Activated B cell treated with CpG ODN at 0.5 μM for 24 hours (primary cell): ENCODE measurements at regions of chr17 and their contacts with region 1.

Region 1: DNA sequence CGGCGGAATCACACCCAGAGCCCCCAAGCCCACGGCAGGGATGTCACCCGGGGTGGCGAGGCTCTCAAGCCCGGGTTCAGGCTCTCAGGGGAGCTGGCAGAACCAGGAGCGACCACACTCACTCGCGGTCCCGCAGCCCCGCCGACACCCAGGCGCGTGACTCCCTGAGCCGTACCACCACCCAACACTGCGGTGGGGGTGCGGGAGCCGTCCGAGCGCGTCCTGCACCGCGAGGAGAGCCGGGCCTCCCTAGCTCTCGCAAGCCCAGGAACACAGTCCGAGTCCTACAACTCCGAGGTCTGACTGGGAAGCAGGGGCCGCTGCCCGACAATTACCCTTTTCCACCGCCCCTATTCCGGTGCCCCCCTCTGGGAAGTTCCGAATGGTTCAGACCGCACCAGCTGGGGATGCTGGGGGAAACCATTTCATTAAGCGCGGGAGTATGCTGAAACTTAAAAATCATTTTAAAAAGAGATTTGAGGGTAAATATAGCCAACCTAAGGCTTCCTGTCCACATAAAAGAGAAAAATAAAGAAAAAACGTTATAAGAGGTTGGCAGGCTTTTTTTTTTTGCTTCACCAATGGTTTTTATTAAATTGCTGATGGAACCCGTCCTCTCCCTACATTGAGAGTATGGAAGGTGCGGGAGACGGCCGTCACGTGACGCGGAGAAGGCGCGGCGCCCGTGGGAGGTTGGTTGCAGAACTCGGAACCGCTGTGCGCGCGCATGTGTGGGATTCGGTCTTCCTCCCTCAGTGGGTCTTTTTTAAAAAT is at the start of gene FLCN:
- DNase-seq: peak; percentile 89
- ATAC-seq: peak; percentile 90
- H3K4me3 Mint-ChIP-seq: peak within 1 kb of the TSS; percentile 96
- H3K27ac Mint-ChIP-seq: peak within 1 kb of the TSS; percentile 99
- H3K4me1 Mint-ChIP-seq: peaks cover 14% of the 10 kb centered on the region
- H3K27me3 Mint-ChIP-seq: no peaks in the 10 kb centered on the region
- CTCF ChIP-seq: no peak
- total RNA-seq, gene FLCN: 54.5 and 62.3 TPM in 2 replicates

Region 2: DNA sequence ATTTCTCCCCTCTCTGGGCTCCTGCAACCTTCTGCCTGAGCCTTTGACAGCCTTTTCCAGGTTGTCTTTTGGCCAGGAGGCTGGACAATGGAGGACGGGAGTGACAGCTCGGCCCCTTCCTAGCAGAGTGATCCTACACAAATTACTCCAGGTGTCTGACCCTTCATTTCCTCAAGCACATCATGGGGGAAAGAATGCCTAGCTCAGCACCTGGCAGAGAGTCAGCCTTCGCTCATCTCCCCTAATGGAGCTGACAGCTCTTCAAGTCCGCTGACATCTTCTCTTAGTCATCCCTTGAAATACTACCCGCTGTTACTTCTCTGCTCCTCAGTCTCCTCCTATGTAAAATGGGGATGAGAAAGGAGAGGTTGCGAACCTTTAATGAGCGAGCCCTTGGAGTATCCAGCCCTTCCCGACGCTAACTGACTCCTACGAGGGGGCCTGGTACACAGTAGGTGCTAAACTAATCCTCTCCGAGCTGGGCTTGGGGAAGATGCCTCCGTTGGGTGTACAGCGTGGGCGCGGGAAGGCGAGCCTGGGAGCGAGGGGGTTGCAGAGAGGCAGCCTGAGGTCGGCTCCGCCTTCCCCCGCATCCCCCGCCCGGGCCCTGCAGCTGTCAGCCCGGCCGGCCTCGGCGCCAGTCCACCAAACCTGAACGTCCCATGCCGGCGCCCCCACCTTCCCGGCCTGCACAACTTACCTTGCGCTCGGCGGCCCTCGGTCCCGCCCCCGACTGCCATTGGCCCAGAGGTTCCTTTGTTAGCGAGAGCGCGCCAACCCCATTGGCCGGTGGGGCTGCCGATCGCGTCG is 195.4 kb before region 1 on chr17:
- CTCF ChIA-PET with region 1: no interaction called
- POLR2A ChIA-PET with region 1: interaction called, 3 read pairs
- intact Hi-C with region 1: loop called (anchors 2 kb)
- DNase-seq: peak; percentile 94
- ATAC-seq: peak; percentile 93
- H3K4me3 Mint-ChIP-seq: peak overlapping the region; percentile 69
- H3K27ac Mint-ChIP-seq: no peak overlapping the region
- H3K4me1 Mint-ChIP-seq: peaks cover 48% of the 10 kb centered on the region
- H3K27me3 Mint-ChIP-seq: no peaks in the 10 kb centered on the region
- CTCF ChIP-seq: no peak

Region 3: DNA sequence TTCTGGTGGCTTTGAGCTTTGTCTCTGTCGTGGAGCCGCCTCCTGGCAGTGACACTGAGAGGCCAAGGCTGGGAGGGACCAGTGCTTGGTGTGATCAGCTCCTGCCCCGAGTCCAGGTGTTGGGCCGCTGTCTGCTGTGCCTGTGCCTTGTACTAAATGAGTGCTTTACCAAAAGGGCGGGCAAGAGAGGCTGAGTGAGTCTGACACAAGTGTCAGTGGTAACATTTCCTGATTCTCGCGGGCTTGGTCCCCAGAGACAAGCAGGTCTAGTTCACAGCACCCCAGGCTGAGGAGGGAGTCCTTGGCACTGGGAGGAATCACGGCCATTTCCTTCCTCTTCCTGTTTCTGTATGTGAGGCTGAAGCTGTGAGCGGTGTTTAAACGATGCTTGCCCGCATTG is 61.3 kb before region 1 on chr17:
- CTCF ChIA-PET with region 1: no interaction called
- POLR2A ChIA-PET with region 1: interaction called, 6 read pairs
- intact Hi-C with region 1: loop called (anchors 2 kb)
- DNase-seq: peak; percentile 47
- ATAC-seq: peak; percentile 94
- H3K4me3 Mint-ChIP-seq: peak overlapping the region; percentile 59
- H3K27ac Mint-ChIP-seq: peak overlapping the region; percentile 80
- H3K4me1 Mint-ChIP-seq: peaks cover 40% of the 10 kb centered on the region
- H3K27me3 Mint-ChIP-seq: no peaks in the 10 kb centered on the region
- CTCF ChIP-seq: no peak

Region 4: GRCh38 chr17:17220529-17220928 is 16.7 kb before region 1 on chr17:
- CTCF ChIA-PET with region 1: no interaction called
- POLR2A ChIA-PET with region 1: no interaction called
- intact Hi-C with region 1: no loop called
- DNase-seq: no peak
- ATAC-seq: no peak
- H3K4me3 Mint-ChIP-seq: no peak overlapping the region
- H3K27ac Mint-ChIP-seq: no peak overlapping the region
- H3K4me1 Mint-ChIP-seq: no peaks in the 10 kb centered on the region
- H3K27me3 Mint-ChIP-seq: no peaks in the 10 kb centered on the region
- CTCF ChIP-seq: no peak

Region 5: DNA sequence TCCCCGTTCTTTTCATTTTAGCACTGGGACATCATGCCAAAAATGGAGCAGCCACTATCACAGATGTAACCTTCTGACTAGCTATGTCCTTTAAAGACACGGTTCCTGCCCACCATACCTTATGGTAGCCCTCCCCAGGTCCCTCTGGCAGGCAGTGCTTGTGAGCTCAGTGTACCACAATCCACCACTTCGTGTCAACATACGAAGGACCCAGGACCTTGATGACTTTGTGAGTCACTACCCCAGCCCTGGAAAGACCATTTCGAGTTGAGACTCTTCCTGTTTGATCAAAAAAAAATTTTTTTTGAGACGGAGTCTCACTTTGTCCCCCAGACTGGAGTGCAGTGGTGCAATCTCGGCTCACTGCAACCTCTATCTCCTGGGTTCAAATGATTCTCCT is 20.8 kb after region 1 on chr17:
- CTCF ChIA-PET with region 1: no interaction called
- POLR2A ChIA-PET with region 1: interaction called, 10 read pairs
- intact Hi-C with region 1: no loop called
- DNase-seq: no peak
- ATAC-seq: no peak
- H3K4me3 Mint-ChIP-seq: no peak overlapping the region
- H3K27ac Mint-ChIP-seq: no peak overlapping the region
- H3K4me1 Mint-ChIP-seq: no peaks in the 10 kb centered on the region
- H3K27me3 Mint-ChIP-seq: no peaks in the 10 kb centered on the region
- CTCF ChIP-seq: no peak

Region 6: DNA sequence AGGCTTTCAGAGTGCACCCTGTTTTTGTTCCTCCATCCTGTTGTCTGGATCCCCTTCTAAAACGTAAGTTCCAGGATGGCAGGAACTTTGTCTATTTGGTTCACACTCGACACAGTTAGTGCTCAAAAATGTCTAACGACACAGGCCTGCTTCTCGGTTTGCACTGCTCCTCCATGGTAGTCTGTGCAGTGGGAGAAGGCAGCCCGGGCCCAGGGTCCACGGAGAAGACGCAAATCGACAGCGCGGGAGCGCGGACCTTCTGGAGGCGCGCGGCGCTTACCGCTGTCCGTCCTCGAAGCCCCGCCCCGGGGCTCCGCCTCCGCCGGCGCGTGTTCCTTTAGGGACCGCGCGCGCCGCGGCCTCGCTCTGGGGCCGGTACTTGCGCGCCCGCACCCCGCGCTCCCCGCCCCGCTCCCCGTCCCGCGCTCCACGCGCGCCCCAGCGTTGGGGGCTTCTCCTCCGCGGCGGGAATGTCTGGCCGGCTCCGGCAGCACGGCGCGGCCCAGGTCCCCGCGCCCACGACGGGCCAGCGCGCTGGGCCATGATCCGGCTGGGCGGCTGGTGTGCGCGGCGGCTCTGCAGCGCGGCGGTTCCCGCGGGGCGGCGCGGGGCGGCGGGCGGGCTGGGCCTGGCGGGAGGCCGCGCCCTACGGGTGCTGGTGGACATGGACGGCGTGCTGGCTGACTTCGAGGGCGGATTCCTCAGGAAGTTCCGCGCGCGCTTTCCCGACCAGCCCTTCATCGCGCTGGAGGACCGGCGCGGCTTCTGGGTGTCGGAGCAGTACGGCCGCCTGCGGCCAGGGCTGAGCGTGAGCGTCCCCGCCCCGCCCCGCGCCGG is 66.0 kb after region 1 on chr17 and contains the start of gene NT5M:
- CTCF ChIA-PET with region 1: no interaction called
- POLR2A ChIA-PET with region 1: no interaction called
- intact Hi-C with region 1: loop called (anchors 5 kb)
- DNase-seq: peak; percentile 73
- ATAC-seq: peak; percentile 76
- H3K4me3 Mint-ChIP-seq: peak within 1 kb of the TSS; percentile 87
- H3K27ac Mint-ChIP-seq: peak within 1 kb of the TSS; percentile 61
- H3K4me1 Mint-ChIP-seq: peaks cover 34% of the 10 kb centered on the region
- H3K27me3 Mint-ChIP-seq: no peaks in the 10 kb centered on the region
- CTCF ChIP-seq: no peak
- total RNA-seq, gene NT5M: 0.71 and 0.93 TPM in 2 replicates

Region 7: DNA sequence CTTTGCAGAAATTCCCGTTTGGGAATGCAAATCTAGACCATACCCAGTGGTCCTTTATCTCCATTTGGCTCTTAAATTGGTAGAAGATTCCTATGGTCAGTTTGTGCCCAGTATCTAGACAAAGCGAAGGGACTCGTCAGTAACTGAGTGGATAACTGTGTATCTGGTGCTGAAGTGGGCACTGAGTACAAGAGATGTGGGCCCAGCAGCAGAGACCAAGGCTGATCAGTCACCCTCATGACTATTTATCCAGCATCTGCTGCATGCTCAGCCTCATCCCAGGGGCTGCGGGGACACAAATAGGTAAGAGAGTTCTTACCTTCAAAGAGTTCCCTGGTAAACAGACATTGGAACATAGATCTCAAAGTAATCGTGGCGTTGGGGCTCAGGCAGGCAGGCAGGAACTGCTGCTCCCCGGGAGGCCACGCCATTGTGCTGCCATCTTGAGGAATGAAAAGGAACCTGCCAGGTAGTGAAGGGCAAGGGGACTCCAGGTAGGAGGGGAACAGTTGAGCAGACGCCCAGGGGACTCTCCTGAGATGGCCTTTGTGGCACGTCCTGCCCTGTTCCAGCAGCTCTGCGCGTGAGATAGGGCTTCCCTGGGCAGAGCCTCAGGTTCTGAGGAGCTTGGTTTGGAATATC is 76.3 kb after region 1 on chr17:
- CTCF ChIA-PET with region 1: no interaction called
- POLR2A ChIA-PET with region 1: no interaction called
- intact Hi-C with region 1: no loop called
- DNase-seq: peak; percentile 38
- ATAC-seq: peak; percentile 97
- H3K4me3 Mint-ChIP-seq: no peak overlapping the region
- H3K27ac Mint-ChIP-seq: no peak overlapping the region
- H3K4me1 Mint-ChIP-seq: no peaks in the 10 kb centered on the region
- H3K27me3 Mint-ChIP-seq: no peaks in the 10 kb centered on the region
- CTCF ChIP-seq: no peak

Region 8: DNA sequence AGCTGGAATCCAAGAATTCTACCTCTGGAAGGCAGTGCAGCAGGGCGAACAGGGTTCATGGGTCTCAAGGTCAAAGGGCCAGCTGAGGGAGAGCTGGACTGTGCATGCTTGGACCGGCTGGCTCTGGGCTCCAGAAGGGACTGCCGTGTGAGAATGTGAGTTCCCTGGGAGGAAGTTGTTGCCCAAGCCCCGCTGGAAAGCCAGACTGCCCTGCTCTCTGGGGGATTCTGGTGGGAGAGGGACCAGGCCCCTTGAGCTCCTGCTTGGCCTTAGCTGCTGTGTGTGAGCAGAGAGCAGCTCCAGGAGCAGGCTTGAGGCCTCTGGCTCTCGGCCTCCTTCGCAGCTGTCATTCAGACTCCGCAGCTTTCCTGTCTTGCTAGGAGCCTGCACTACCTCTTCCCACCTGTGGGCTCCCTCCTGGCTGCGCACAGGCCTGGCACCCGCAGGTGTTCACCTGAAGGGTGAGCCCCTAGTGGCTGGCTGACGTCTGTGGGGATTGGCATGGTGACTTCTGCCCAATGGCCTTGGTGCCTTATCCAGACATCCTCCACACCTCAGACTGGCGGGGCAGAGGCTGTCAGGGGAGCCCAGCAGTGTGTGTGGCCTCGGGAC is 150.7 kb after region 1 on chr17:
- CTCF ChIA-PET with region 1: no interaction called
- POLR2A ChIA-PET with region 1: no interaction called
- intact Hi-C with region 1: no loop called
- DNase-seq: no peak
- ATAC-seq: no peak
- H3K4me3 Mint-ChIP-seq: no peak overlapping the region
- H3K27ac Mint-ChIP-seq: no peak overlapping the region
- H3K4me1 Mint-ChIP-seq: peaks cover 12% of the 10 kb centered on the region
- H3K27me3 Mint-ChIP-seq: peaks cover 6% of the 10 kb centered on the region
- CTCF ChIP-seq: no peak